Transverse colon (tissue), 4 donors: ENCODE measurements at regions of chr14 and their contacts with region 1.

Region 1: GRCh38 chr14:59454131-59454530 is 11.0 kb downstream of the GPR135 start:
- DNase-seq: no peak
- H3K4me3 ChIP-seq: no peak overlapping the region
- H3K27ac ChIP-seq: no peak overlapping the region
- H3K4me1 ChIP-seq: no peaks in the 10 kb centered on the region
- H3K27me3 ChIP-seq: no peaks in the 10 kb centered on the region
- CTCF ChIP-seq: no peak
- EP300 ChIP-seq: no peak
- POLR2A ChIP-seq: no peak

Region 2: GRCh38 chr14:59301354-59301753 is 152.8 kb before region 1 on chr14:
- in situ Hi-C with region 1: no loop called
- intact Hi-C with region 1: no loop called
- DNase-seq: peak; percentile 13
- H3K4me3 ChIP-seq: no peak overlapping the region
- H3K27ac ChIP-seq: no peak overlapping the region
- H3K4me1 ChIP-seq: peaks cover 0 to 20% (median 8%) of the 10 kb centered on the region in 4 donors
- H3K27me3 ChIP-seq: no peaks in the 10 kb centered on the region
- CTCF ChIP-seq: no peak
- EP300 ChIP-seq: no peak
- POLR2A ChIP-seq: no peak

Region 3: DNA sequence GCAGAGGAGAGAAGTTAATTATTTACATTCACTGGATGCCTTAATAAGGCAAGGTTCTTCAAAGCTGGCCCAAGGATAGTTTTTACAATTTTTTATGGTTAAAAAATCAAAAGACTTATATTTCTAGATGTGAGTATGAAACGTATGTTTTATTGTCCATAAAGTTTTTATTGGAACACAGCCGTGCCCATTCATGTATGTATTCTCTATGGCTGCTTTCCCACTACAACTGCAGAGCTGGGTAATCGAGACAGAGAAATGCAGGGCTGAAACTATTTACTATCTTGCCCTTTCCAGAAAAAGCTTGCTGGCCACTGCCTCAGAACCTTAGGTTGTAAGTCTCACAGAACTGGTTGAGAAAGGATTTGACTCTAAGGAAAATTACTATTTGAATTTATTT is 46.6 kb after region 1 on chr14:
- in situ Hi-C with region 1: no loop called
- intact Hi-C with region 1: loop called (anchors 2 kb)
- DNase-seq: no peak
- H3K4me3 ChIP-seq: no peak overlapping the region
- H3K27ac ChIP-seq: no peak overlapping the region
- H3K4me1 ChIP-seq: peaks cover 0 to 16% (median 4%) of the 10 kb centered on the region in 4 donors
- H3K27me3 ChIP-seq: no peaks in the 10 kb centered on the region
- CTCF ChIP-seq: no peak
- EP300 ChIP-seq: no peak
- POLR2A ChIP-seq: no peak